HCT116 (cell line): ENCODE measurements at regions of chr4 and their contacts with region 1.

Region 1: GRCh38 chr4:154928640-154929257 is 147.7 kb downstream of the RBM46 start:
- DNase-seq: peak; percentile 43
- ATAC-seq: peak; percentile 81
- H3K4me3 ChIP-seq: no peak overlapping the region
- H3K27ac ChIP-seq: no peak overlapping the region
- H3K4me1 ChIP-seq: no peaks in the 10 kb centered on the region
- H3K27me3 ChIP-seq: no peaks in the 10 kb centered on the region
- CTCF ChIP-seq: peak; percentile 55 to 93 (median 63)
- POLR2A ChIP-seq: no peak
- RAD21 ChIP-seq: peak; percentile 85

Region 2: DNA sequence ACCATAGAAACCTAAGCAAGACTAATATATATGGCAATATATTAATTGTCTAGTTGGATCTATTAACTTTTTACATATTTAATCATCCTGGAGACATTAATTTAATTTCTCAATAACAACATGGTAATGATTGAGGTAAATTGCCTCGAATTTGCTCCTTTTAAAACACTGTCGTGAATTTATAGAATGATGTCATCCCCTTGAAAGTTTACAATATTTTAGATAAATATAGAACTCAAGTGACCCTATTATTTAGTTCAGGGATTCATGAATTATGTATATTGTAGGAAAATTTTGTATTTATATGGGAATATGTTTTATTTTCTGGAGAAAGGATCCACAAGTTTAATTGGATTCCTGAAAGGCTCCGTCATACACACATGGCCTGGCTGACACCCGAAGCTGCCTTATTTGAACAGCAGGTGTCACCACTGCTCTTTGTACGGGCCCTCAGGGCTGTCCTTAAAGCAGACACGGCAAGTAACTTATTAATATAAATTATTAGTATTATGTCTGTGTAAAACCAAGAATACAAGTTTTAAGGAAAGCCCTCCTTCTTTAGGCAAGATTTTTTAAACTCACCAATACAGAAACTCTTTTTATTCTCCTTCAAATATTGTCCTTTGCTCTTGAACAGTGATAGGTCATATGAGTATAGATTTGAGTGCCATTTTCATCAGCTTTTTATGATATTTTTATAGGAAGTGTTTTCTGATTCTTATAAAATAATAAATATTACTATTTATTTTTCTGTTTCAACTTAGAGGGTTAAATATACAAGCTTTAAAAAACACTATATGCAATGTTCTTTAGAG is 376.7 kb before region 1 on chr4:
- CTCF ChIA-PET with region 1: no interaction called
- POLR2A ChIA-PET with region 1: no interaction called
- RAD21 ChIA-PET with region 1: no interaction called
- intact Hi-C with region 1: loop called (anchors 5 kb)
- DNase-seq: peak; percentile 79
- ATAC-seq: peak; percentile 66
- H3K4me3 ChIP-seq: no peak overlapping the region
- H3K27ac ChIP-seq: no peak overlapping the region
- H3K4me1 ChIP-seq: peaks cover 2 to 12% of the 10 kb centered on the region in 2 experiments; a peak in 3 of 4 replicates
- H3K27me3 ChIP-seq: no peaks in the 10 kb centered on the region
- CTCF ChIP-seq: peak; percentile 68 to 83 (median 83)
- POLR2A ChIP-seq: no peak
- RAD21 ChIP-seq: peak; percentile 86

Region 3: GRCh38 chr4:154660052-154660451 is 268.7 kb before region 1 on chr4:
- CTCF ChIA-PET with region 1: no interaction called
- POLR2A ChIA-PET with region 1: no interaction called
- RAD21 ChIA-PET with region 1: no interaction called
- intact Hi-C with region 1: no loop called
- DNase-seq: no peak
- ATAC-seq: no peak
- H3K4me3 ChIP-seq: no peak overlapping the region
- H3K27ac ChIP-seq: no peak overlapping the region
- H3K4me1 ChIP-seq: peaks cover 0 to 6% of the 10 kb centered on the region in 2 experiments; a peak in 1 of 4 replicates
- H3K27me3 ChIP-seq: no peaks in the 10 kb centered on the region
- CTCF ChIP-seq: no peak
- POLR2A ChIP-seq: no peak
- RAD21 ChIP-seq: no peak